Activated CD8-positive, alpha-beta T cell treated with anti-CD3 and anti-CD28 coated beads, Interleukin-2, amount 10 ng/mL, durations not matched to agents 7 days and 5 days (primary cell): ENCODE measurements at regions of chr7 and their contacts with region 1.

Region 1: GRCh38 chr7:128409596-128410160 is at the start of gene IMPDH1:
- DNase-seq: peak; percentile 87
- ATAC-seq: peak; percentile 88
- H3K4me3 Mint-ChIP-seq: peak within 1 kb of the TSS; percentile 88
- H3K27ac Mint-ChIP-seq: peak within 1 kb of the TSS; percentile 77
- H3K4me1 Mint-ChIP-seq: peaks cover 31% of the 10 kb centered on the region
- H3K27me3 Mint-ChIP-seq: peaks cover 21% of the 10 kb centered on the region
- total RNA-seq, gene IMPDH1: 75.3 to 80.8 TPM

Region 2: GRCh38 chr7:128398016-128398840 is 11.4 kb before region 1 on chr7:
- CTCF ChIA-PET with region 1: interaction called, 17 read pairs
- POLR2A ChIA-PET with region 1: no interaction called
- DNase-seq: peak; percentile 46
- ATAC-seq: peak; percentile 35
- H3K4me3 Mint-ChIP-seq: no peak overlapping the region
- H3K27ac Mint-ChIP-seq: peak overlapping the region; percentile 28
- H3K4me1 Mint-ChIP-seq: peaks cover 8% of the 10 kb centered on the region
- H3K27me3 Mint-ChIP-seq: no peaks in the 10 kb centered on the region